ENCODE measurements at regions of chr17 and their contacts with region 1.

Region 1: DNA sequence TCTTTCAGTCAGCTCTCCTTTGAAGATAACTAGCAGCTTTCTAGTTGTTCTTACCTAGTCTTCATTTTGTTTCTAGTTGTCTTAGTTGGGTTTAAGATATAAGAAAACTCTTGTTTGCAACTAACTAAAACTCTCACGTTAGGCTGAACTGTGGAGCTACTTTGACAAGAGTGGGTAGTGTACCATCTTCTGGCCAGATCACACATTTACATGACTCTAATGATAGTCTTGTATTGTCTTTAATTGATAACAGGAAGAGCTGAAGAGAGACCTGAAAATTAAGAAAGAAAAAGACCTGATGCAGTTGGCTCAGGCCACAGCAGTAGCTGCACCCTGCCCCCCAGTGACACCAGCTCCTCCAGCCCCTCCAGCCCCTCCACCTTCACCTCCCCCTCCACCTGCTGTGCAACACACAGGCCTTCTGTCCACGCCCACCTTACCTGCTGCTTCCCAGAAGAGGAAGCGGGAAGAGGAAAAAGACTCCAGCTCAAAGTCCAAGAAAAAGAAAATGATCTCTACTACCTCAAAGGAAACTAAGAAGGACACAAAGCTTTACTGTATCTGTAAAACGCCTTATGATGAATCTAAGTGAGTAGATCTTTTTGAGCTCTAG is 36.9 kb downstream of the C17orf58 start:
- DNase-seq: no peak
- ATAC-seq: no peak
- H3K4me3 Mint-ChIP-seq: no peak overlapping the region
- H3K27ac Mint-ChIP-seq: no peak overlapping the region
- H3K4me1 Mint-ChIP-seq: peaks cover 3% of the 10 kb centered on the region
- H3K27me3 Mint-ChIP-seq: no peaks in the 10 kb centered on the region
- CTCF ChIP-seq: no peak

Region 2: DNA sequence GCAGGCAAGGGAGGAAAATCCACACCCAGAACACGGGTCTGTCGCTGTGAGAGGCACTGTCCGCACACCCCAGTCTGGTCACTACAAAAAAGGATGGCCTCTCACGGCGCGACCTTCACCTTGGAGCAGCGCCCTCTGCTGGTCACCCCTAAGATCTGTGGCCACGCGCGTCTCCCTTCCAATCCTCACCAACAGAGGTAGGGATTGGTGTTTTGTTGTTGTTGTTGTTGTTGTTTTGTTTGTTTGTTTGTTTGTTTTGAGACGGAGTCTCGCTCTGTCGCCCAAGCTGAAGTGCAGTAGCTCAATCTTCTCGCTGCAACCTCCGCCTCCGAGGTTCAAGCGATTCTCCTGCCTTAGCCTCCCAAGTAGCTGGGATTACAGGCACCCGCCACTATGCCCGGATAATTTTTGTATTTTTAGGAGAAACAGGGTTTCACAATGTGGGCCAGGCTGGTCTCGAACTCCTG is 51.8 kb after region 1 on chr17:
- CTCF ChIA-PET with region 1: no interaction called
- POLR2A ChIA-PET with region 1: no interaction called
- intact Hi-C with region 1: loop called (anchors 1 kb)
- DNase-seq: peak; percentile 45
- ATAC-seq: peak; percentile 65
- H3K4me3 Mint-ChIP-seq: no peak overlapping the region
- H3K27ac Mint-ChIP-seq: no peak overlapping the region
- H3K4me1 Mint-ChIP-seq: peaks cover 5% of the 10 kb centered on the region
- H3K27me3 Mint-ChIP-seq: peaks cover 8% of the 10 kb centered on the region
- CTCF ChIP-seq: no peak

Region 3: GRCh38 chr17:68133346-68134045 is 174.1 kb after region 1 on chr17:
- CTCF ChIA-PET with region 1: no interaction called
- POLR2A ChIA-PET with region 1: no interaction called
- intact Hi-C with region 1: no loop called
- DNase-seq: no peak
- ATAC-seq: no peak
- H3K4me3 Mint-ChIP-seq: no peak overlapping the region
- H3K27ac Mint-ChIP-seq: no peak overlapping the region
- H3K4me1 Mint-ChIP-seq: no peaks in the 10 kb centered on the region
- H3K27me3 Mint-ChIP-seq: no peaks in the 10 kb centered on the region
- CTCF ChIP-seq: no peak

Measured in activated B cell treated with CpG ODN at 0.5 μM for 24 hours (primary cell).